WTC11 (cell line): ENCODE measurements at regions of chr13 and their contacts with region 1.

Region 1: GRCh38 chr13:27362064-27362883 is 62.1 kb upstream of the GTF3A start:
- DNase-seq: peak; percentile 95
- ATAC-seq: peak; percentile 93
- H3K4me3 Mint-ChIP-seq: peak overlapping the region; percentile 80
- H3K27ac Mint-ChIP-seq: no peak overlapping the region
- H3K4me1 Mint-ChIP-seq: peaks cover 24% of the 10 kb centered on the region
- H3K27me3 Mint-ChIP-seq: no peaks in the 10 kb centered on the region; the same call in none of the 2 replicates
- CTCF ChIP-seq: peak; percentile 88

Region 2: GRCh38 chr13:26965952-26966700 is 396.1 kb before region 1 on chr13:
- CTCF ChIA-PET with region 1: interaction called, 22 read pairs
- POLR2A ChIA-PET with region 1: no interaction called
- DNase-seq: no peak
- ATAC-seq: no peak
- H3K4me3 Mint-ChIP-seq: no peak overlapping the region
- H3K27ac Mint-ChIP-seq: no peak overlapping the region
- H3K4me1 Mint-ChIP-seq: peaks cover 10% of the 10 kb centered on the region
- H3K27me3 Mint-ChIP-seq: no peaks in the 10 kb centered on the region
- CTCF ChIP-seq: no peak

Region 3: GRCh38 chr13:26991508-26992181 is 370.6 kb before region 1 on chr13:
- CTCF ChIA-PET with region 1: interaction called, 50 read pairs
- POLR2A ChIA-PET with region 1: no interaction called
- DNase-seq: no peak
- ATAC-seq: no peak
- H3K4me3 Mint-ChIP-seq: no peak overlapping the region
- H3K27ac Mint-ChIP-seq: no peak overlapping the region; the same call in 1 of the 2 replicates
- H3K4me1 Mint-ChIP-seq: no peaks in the 10 kb centered on the region
- H3K27me3 Mint-ChIP-seq: no peaks in the 10 kb centered on the region; the same call in 1 of the 2 replicates
- CTCF ChIP-seq: no peak

Region 4: DNA sequence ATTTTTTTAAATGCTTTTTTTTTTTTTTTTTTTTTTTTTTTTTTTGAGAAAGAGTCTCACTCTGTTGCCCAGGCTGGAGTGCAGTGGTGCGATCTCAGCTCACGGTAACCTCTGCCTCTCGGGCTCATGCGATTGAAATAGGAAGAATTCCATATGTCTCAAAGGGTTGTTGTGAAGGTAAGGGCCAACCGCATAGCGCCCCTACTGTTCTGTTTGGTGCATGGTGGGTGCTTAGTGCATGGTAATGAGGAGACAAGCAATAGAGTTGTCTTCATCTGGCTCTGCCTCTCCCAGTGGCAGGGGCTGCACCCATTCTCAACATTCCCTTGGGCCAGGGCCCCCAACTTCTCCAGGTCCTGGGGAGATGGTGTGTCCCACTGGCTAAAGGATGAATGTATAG is 23.0 kb before region 1 on chr13:
- CTCF ChIA-PET with region 1: interaction called, 91 read pairs
- POLR2A ChIA-PET with region 1: no interaction called
- DNase-seq: peak; percentile 75
- ATAC-seq: peak; percentile 85
- H3K4me3 Mint-ChIP-seq: no peak overlapping the region
- H3K27ac Mint-ChIP-seq: no peak overlapping the region
- H3K4me1 Mint-ChIP-seq: peaks cover 50% of the 10 kb centered on the region
- H3K27me3 Mint-ChIP-seq: no peaks in the 10 kb centered on the region; the same call in 1 of the 2 replicates
- CTCF ChIP-seq: peak; percentile 43

Region 5: GRCh38 chr13:27403203-27403678 is 41.0 kb after region 1 on chr13:
- CTCF ChIA-PET with region 1: interaction called, 18 read pairs
- POLR2A ChIA-PET with region 1: no interaction called
- DNase-seq: no peak
- ATAC-seq: peak; percentile 79
- H3K4me3 Mint-ChIP-seq: no peak overlapping the region
- H3K27ac Mint-ChIP-seq: peak overlapping the region; percentile 46
- H3K4me1 Mint-ChIP-seq: peaks cover 18% of the 10 kb centered on the region
- H3K27me3 Mint-ChIP-seq: no peaks in the 10 kb centered on the region
- CTCF ChIP-seq: no peak

Region 6: GRCh38 chr13:27620377-27621115 is 258.3 kb after region 1 on chr13 and contains the start of gene LNX2:
- CTCF ChIA-PET with region 1: interaction called, 10 read pairs
- POLR2A ChIA-PET with region 1: no interaction called
- DNase-seq: peak; percentile 98
- ATAC-seq: peak; percentile 92
- H3K4me3 Mint-ChIP-seq: peak within 1 kb of the TSS; percentile 93
- H3K27ac Mint-ChIP-seq: peak within 1 kb of the TSS; percentile 96
- H3K4me1 Mint-ChIP-seq: peaks cover 54% of the 10 kb centered on the region
- H3K27me3 Mint-ChIP-seq: no peaks in the 10 kb centered on the region
- CTCF ChIP-seq: no peak
- total RNA-seq, gene LNX2: 9.6 to 10.1 TPM (median 9.8 TPM) in 3 replicates

Region 7: DNA sequence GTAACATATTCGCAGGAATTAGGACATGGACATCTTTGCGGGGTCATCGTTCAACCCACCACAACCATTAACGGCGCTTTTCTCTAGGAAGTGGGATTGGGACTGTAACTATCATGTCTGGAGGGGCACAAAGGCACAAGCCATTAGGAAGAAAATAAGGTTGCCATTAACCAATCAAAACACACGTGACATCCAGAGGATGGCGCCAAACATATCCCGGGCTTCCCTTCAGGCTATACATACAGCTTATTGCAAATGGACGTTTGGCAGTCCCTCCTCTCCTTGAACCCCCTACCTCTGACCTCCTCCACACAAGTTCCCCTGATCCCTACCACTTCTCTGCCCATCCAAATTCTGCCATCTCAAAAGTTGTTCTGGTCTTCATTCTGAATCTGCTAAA is 403.4 kb after region 1 on chr13:
- CTCF ChIA-PET with region 1: no interaction called
- POLR2A ChIA-PET with region 1: no interaction called
- DNase-seq: no peak
- ATAC-seq: peak; percentile 34; the same call in 1 of the 2 replicates
- H3K4me3 Mint-ChIP-seq: no peak overlapping the region
- H3K27ac Mint-ChIP-seq: no peak overlapping the region
- H3K4me1 Mint-ChIP-seq: no peaks in the 10 kb centered on the region
- H3K27me3 Mint-ChIP-seq: peaks cover 14% of the 10 kb centered on the region
- CTCF ChIP-seq: no peak